ENCODE measurements at regions of chr1 and their contacts with region 1.

Region 1: DNA sequence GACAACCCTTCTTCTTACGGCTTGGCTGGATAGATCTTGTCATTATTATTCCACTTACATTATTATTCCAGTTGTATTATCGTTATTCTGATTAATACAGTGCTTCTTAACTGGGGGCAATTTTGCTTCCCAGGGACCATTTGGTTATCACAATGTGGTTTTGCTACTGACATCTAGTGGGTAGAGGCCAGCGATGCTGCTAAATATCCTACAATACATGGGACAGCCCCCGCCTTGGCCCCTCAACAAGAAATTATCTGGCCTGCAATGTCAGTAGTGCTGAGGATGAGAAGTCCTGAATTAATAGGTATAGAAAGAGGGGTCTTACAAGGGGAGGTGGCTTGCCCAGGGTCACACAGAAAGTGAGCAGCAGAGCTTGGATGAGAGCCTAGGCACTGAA is 105.6 kb downstream of the PTPRU start:
- DNase-seq: no peak
- ATAC-seq: no peak
- H3K4me3 ChIP-seq: no peak overlapping the region
- H3K27ac ChIP-seq: no peak overlapping the region
- H3K4me1 ChIP-seq: no peaks in the 10 kb centered on the region
- H3K27me3 ChIP-seq: peaks cover 0 to 63% (median 14%) of the 10 kb centered on the region in 9 donors
- CTCF ChIP-seq: peak in 3 of 12 donors; percentile 14 to 24 (median 22)
- POLR2A ChIP-seq: no peak

Region 2: DNA sequence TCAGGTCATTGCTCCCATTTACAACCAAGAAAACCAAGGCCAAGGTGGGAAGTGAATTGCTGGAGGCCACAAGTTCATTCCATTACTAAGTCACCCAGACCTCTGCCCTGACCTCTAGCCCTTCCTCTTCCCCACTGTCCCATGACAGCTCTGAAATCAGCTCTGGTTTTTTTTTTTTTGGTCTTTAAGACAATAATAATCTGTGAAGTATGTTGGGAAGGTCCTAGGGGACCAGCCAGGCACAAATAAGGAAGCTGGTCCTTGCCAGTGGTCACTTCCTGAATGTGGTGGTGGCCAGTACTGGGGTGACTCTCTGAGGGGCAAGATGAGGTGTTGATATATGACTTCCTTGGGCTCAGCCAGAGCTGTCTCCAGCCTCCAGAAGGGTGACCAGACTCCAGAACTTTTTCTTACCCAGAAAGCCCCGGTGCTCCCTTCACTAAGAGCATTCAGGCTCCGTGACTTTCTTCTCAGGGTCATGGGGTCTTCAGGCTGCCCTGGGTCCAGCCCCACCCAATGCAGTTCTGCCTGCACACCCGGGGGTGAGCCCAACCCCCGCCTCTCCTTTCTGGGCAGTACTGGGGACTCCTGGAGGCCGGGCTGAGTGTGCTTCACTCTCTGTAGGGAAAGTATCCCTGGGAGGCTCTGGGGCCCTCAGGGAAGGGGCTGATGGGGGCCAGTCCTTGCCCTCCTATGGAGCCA is 54.0 kb after region 1 on chr1:
- intact Hi-C with region 1: no loop called
- DNase-seq: no peak
- ATAC-seq: no peak
- H3K4me3 ChIP-seq: no peak overlapping the region
- H3K27ac ChIP-seq: no peak overlapping the region
- H3K4me1 ChIP-seq: peaks cover 0 to 8% (median 0%) of the 10 kb centered on the region in 12 donors
- H3K27me3 ChIP-seq: peaks cover 0 to 13% (median 4%) of the 10 kb centered on the region in 9 donors
- CTCF ChIP-seq: no peak
- POLR2A ChIP-seq: no peak

Region 3: DNA sequence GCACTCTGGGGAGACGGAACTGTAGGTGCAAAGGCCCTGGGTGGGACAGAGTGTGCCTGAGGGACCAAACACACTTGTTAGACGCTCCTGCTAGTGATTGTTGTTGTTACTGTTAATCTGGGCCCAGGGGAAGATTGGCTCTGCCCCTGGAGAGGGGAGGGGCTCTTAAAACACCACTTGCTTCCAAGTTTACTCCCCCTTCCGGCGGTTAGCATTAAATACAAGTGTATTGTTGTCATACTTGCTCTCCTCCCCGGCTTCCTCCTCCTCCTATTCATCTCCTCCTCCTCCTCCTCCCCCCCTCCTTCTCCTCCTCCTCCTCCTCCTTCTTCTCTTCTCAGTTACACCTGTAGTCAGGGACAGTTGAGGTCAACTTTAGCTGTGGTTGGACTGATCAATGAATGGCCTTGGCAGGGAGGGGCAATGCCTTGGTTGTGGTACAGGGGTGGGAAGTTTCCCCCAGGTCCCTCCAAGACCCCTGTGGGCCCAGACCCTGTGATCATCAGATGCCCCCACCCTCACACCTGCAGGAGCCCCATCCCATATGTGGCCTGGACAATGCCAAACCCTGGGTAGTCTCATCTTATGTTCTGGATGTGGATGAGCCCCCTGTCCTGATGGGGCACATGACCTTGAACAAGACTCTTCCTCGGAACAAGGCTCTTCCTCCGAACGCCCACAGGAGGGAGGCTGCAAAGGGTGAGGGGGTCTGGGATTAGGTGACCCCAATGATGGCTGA is 111.7 kb after region 1 on chr1:
- intact Hi-C with region 1: loop called in 1 of 10 experiments (anchors 10 kb)
- DNase-seq: no peak
- ATAC-seq: peak in 1 of 4 donors; percentile 56
- H3K4me3 ChIP-seq: no peak overlapping the region
- H3K27ac ChIP-seq: no peak overlapping the region
- H3K4me1 ChIP-seq: no peaks in the 10 kb centered on the region
- H3K27me3 ChIP-seq: peaks cover 0 to 28% (median 0%) of the 10 kb centered on the region in 9 donors
- CTCF ChIP-seq: peak in 7 of 12 donors; percentile 7 to 38 (median 21)
- POLR2A ChIP-seq: no peak

Region 4: GRCh38 chr1:30106125-30106524 is 764.2 kb after region 1 on chr1:
- intact Hi-C with region 1: loop called in 1 of 10 experiments (anchors 10 kb)
- DNase-seq: peak in 1 of 5 donors; percentile 28
- ATAC-seq: peak in 3 of 4 donors; percentile 35 to 70 (median 65)
- H3K4me3 ChIP-seq: no peak overlapping the region
- H3K27ac ChIP-seq: no peak overlapping the region
- H3K4me1 ChIP-seq: no peaks in the 10 kb centered on the region
- H3K27me3 ChIP-seq: peaks cover 0 to 67% (median 11%) of the 10 kb centered on the region in 9 donors
- CTCF ChIP-seq: peak; percentile 19 to 65 (median 35)
- POLR2A ChIP-seq: no peak